ENCODE measurements at regions of chr3 and their contacts with region 1.

Region 1: DNA sequence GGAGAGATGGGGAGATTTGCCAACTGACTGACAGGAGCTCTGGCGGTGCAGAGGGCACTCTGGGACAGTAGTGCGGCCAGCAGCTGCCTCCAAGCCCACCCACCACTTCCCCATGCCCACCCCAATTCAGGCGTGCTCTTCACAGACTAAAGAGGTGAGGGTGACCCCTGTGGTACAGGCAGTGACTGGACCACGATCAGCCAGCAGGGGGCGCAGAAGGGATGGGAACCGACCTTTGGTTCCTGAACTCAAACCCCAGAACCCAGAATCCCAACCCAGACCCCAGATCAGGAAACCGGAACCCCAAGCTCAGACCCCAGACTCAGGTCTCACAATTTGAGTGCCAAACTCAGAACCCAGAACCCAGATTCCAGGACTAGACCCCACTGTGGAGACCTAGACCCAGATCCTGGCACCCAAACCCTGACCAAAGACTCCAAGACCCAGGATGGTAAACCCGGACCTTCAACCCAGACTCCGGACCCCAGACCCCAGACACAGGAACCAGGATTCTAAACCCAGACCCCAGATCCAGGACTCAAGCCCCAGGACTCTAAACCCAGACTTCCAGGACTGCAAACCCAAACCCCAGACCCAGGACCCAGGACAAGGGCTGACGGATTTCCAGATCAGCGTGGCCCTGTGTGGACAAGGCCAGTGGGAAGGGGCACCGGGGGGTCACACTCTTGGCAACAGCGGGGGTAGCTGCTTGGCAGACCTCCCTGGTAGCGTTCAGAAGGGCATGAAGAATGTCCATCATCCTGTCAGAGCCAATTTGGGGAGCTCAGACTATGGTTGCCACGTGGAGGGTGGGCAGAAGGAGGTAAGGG is 3.7 kb upstream of the MYL3 start:
- DNase-seq: peak; percentile 82
- H3K4me3 Mint-ChIP-seq: no peak overlapping the region
- H3K27ac Mint-ChIP-seq: no peak overlapping the region
- H3K4me1 Mint-ChIP-seq: no peaks in the 10 kb centered on the region
- H3K27me3 Mint-ChIP-seq: peaks cover 2% of the 10 kb centered on the region

Region 2: DNA sequence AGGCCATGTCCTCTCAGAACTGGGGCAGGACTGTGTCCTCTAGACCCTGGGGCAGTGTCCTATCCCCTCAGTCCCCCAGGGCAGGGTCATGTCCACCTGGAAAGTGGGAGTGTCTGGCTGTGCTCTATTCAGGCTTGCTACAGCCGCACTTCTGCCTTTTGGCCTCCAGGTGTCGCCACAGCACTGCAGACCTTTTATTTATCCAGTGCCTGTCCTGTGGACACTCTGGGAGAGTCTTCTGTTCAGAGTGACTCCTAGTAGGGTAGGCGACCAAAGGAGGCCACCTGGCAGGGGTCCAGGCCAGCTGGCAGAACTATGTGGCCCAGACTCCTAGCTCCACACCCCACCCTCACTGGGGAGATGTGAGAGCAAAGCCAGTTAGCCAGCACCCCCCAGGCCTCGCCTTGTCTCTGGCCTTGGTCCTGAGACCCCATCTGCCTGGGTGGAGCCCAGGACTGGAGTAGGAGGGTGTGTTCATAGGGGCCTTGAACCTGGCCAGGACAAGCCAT is 161.9 kb before region 1 on chr3:
- CTCF ChIA-PET with region 1: interaction called, 5 read pairs
- POLR2A ChIA-PET with region 1: no interaction called
- intact Hi-C with region 1: loop called (anchors 10 kb)
- DNase-seq: peak; percentile 77
- H3K4me3 Mint-ChIP-seq: no peak overlapping the region
- H3K27ac Mint-ChIP-seq: no peak overlapping the region
- H3K4me1 Mint-ChIP-seq: peaks cover 10% of the 10 kb centered on the region
- H3K27me3 Mint-ChIP-seq: peaks cover 2% of the 10 kb centered on the region

Region 3: GRCh38 chr3:46895204-46895660 is 28.3 kb after region 1 on chr3:
- CTCF ChIA-PET with region 1: interaction called, 13 read pairs
- POLR2A ChIA-PET with region 1: no interaction called
- intact Hi-C with region 1: loop called (anchors 2 kb)
- DNase-seq: peak; percentile 83
- H3K4me3 Mint-ChIP-seq: no peak overlapping the region
- H3K27ac Mint-ChIP-seq: no peak overlapping the region
- H3K4me1 Mint-ChIP-seq: peaks cover 7% of the 10 kb centered on the region
- H3K27me3 Mint-ChIP-seq: peaks cover 49% of the 10 kb centered on the region

Region 4: GRCh38 chr3:46909535-46910442 is 42.9 kb after region 1 on chr3:
- CTCF ChIA-PET with region 1: interaction called, 26 read pairs
- POLR2A ChIA-PET with region 1: no interaction called
- intact Hi-C with region 1: loop called (anchors 1 kb)
- DNase-seq: peak; percentile 90
- H3K4me3 Mint-ChIP-seq: no peak overlapping the region
- H3K27ac Mint-ChIP-seq: no peak overlapping the region
- H3K4me1 Mint-ChIP-seq: peaks cover 21% of the 10 kb centered on the region
- H3K27me3 Mint-ChIP-seq: no peaks in the 10 kb centered on the region

Region 5: GRCh38 chr3:46998121-46998851 is 131.4 kb after region 1 on chr3:
- CTCF ChIA-PET with region 1: interaction called, 3 read pairs
- POLR2A ChIA-PET with region 1: no interaction called
- intact Hi-C with region 1: loop called (anchors 5 kb)
- DNase-seq: peak; percentile 82
- H3K4me3 Mint-ChIP-seq: no peak overlapping the region
- H3K27ac Mint-ChIP-seq: peak overlapping the region; percentile 66
- H3K4me1 Mint-ChIP-seq: peaks cover 17% of the 10 kb centered on the region
- H3K27me3 Mint-ChIP-seq: no peaks in the 10 kb centered on the region

Region 6: GRCh38 chr3:47324278-47324865 is 457.4 kb after region 1 on chr3:
- CTCF ChIA-PET with region 1: interaction called, 6 read pairs
- POLR2A ChIA-PET with region 1: no interaction called
- intact Hi-C with region 1: loop called (anchors 2 kb)
- DNase-seq: peak; percentile 64
- H3K4me3 Mint-ChIP-seq: no peak overlapping the region
- H3K27ac Mint-ChIP-seq: no peak overlapping the region
- H3K4me1 Mint-ChIP-seq: peaks cover 3% of the 10 kb centered on the region
- H3K27me3 Mint-ChIP-seq: no peaks in the 10 kb centered on the region

Measured in activated CD4-positive, alpha-beta memory T cell treated with anti-CD3 and anti-CD28 coated beads for 36 hours (primary cell).